ENCODE measurements at regions of chr18 and their contacts with region 1.

Region 1: GRCh38 chr18:13464432-13465123 is 246.0 kb downstream of the LDLRAD4 start:
- H3K4me3 Mint-ChIP-seq: peak overlapping the region; percentile 65
- H3K27ac Mint-ChIP-seq: peak overlapping the region; percentile 72
- H3K4me1 Mint-ChIP-seq: peaks cover 54% of the 10 kb centered on the region
- H3K27me3 Mint-ChIP-seq: no peaks in the 10 kb centered on the region

Region 2: DNA sequence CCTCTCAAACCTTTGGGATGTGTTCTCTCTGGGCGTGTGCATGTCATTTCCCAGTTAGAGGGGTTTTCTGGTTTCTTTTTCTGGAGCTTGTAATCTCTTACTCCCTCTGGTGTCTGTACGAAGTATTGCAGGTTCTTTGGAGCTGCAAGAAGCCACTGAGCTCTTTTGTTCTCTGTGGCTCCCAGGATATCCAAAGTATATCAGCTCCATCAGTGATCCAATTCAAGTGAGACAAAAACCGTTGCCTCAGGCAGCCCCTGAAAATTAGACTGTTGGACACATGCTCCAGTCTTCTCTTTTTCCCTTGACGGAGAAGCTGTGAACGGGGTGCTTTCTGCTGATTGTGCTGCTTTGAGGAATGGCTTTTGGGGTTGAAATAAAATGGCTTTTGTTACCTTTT is 305.0 kb before region 1 on chr18:
- intact Hi-C with region 1: no loop called
- H3K4me3 Mint-ChIP-seq: no peak overlapping the region
- H3K27ac Mint-ChIP-seq: no peak overlapping the region
- H3K4me1 Mint-ChIP-seq: no peaks in the 10 kb centered on the region
- H3K27me3 Mint-ChIP-seq: peaks cover 2% of the 10 kb centered on the region

Region 3: DNA sequence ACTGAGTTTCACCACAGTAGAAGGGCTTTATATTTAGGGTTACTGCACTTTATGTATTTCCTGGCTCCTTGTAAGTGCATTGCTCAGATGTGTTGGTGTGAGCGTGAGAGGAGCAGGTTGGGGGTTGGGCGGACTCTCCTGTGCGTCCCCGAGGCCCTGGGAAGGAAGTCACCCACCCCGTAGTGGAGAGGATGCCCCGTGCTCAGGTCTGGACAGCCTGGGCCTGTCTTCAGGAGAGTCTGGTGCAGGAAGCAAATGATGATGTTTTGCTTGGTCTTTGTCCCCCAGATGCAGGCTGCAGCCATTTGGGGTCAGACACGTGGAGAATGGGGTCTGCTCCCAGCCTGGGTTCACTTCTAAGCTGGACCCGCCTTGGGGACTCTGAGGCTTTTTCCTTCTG is 63.2 kb before region 1 on chr18:
- intact Hi-C with region 1: loop called (anchors 10 kb)
- H3K4me3 Mint-ChIP-seq: no peak overlapping the region
- H3K27ac Mint-ChIP-seq: no peak overlapping the region
- H3K4me1 Mint-ChIP-seq: no peaks in the 10 kb centered on the region
- H3K27me3 Mint-ChIP-seq: no peaks in the 10 kb centered on the region

Measured in dendritic cell treated with granulocyte-macrophage colony-stimulating factor and Interleukin-4, amounts not matched to agents 40 ng/mL and 50 ng/mL, for 4 days (primary cell).